ENCODE measurements at regions of chr10 and their contacts with region 1.

Region 1: DNA sequence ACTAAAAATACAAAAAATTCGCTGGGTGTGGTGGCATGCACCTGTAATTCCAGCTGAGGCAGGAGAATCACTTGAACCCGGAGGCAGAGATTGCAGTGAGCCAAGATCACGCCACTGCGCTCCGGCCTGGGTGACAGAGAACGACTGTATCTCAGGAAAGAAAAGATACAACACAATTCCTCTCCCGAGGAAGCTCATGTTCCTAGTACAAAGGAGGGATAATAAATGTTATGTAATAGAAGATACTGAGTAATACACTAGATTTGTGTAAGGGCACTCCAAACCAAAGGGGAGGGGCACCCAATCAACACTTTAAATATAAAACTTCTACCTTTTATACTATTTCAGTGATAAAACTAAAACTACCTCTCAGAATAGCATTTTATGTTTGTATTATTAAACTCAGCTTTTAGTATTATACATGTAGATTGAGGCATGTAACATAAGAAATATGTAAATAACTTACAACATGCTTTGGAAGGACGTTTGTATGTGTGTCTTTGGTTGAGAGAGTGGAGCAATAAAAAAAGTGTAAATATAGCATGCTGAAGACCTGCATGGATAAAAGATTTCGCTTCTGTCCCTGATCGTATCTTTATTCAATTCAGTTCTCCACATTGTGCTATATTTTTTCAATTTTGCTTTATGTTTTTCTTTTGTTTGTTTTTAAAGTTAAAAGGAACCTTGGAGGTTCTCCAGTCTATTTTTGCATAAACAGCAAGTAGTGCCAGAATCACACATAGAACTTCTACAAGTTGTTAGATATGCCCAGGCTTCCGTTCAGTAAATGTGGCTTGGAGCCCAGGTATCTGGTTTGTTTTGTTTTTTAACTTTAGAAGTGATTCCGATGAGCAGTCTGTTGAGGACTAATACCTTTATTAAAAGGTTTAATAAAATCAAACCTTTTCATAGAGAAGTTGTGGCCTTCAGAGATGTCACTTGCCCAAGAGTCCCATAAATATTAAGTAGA is 71.9 kb downstream of the WAC start:
- H3K4me3 Mint-ChIP-seq: no peak overlapping the region
- H3K27ac Mint-ChIP-seq: no peak overlapping the region
- H3K4me1 Mint-ChIP-seq: peaks cover 6% of the 10 kb centered on the region
- H3K27me3 Mint-ChIP-seq: no peaks in the 10 kb centered on the region

Region 2: DNA sequence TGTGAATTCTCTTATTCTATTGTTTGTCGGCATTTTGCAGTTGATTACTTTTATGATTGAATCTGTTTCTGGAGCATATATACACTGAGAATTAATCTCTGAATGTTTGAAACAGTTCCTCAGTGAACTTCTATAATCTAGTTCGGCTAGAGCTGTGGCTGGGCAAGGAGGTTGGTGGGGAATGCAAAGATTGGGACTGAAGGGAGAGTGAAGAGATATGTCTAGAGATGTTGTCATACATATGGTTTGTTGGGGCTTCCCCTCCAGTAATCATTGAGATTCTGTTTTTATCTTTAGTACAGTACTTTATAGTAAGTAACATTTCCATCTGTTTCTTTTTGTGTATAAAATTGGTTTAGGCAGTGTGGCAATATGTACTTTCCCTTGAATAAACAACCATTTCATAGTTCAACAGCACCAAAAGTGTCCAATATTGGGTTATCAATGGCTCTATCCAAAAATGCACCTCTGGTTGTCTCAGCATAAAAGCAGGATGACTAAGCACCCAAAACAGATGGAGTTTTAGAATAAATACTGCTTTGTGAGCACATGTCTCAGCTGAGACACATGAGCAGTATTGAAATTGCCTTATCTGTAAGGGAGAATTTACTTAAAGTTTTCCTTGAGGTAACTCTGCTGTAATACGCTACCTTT is 35.2 kb before region 1 on chr10:
- intact Hi-C with region 1: loop called (anchors 5 kb)
- H3K4me3 Mint-ChIP-seq: no peak overlapping the region
- H3K27ac Mint-ChIP-seq: no peak overlapping the region
- H3K4me1 Mint-ChIP-seq: peaks cover 69% of the 10 kb centered on the region
- H3K27me3 Mint-ChIP-seq: no peaks in the 10 kb centered on the region

Region 3: DNA sequence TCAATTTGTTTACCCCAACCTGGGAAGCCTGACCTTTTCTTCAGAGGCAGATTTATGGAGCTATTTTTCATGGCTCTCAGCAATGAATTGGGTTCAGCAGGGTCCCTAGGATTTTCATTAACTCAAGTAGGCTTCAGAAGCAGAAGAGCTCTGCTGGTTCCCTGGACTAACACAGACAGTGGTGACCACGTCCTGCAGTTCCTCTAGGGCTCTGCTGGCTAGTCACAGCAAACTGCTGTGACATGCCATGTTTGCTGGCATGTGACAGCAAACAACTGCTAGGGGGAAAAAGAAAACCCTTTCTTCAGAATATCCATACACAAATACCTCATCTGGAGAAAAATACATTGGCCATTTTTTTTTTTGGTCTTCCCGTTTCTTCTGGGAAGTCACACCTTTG is 85.7 kb after region 1 on chr10:
- intact Hi-C with region 1: no loop called
- H3K4me3 Mint-ChIP-seq: no peak overlapping the region
- H3K27ac Mint-ChIP-seq: no peak overlapping the region
- H3K4me1 Mint-ChIP-seq: no peaks in the 10 kb centered on the region
- H3K27me3 Mint-ChIP-seq: peaks cover 18% of the 10 kb centered on the region

Region 4: GRCh38 chr10:28839600-28840007 is 234.8 kb after region 1 on chr10:
- intact Hi-C with region 1: no loop called
- H3K4me3 Mint-ChIP-seq: no peak overlapping the region
- H3K27ac Mint-ChIP-seq: no peak overlapping the region
- H3K4me1 Mint-ChIP-seq: no peaks in the 10 kb centered on the region
- H3K27me3 Mint-ChIP-seq: no peaks in the 10 kb centered on the region